ENCODE measurements at regions of chr2 and their contacts with region 1.

Region 1: DNA sequence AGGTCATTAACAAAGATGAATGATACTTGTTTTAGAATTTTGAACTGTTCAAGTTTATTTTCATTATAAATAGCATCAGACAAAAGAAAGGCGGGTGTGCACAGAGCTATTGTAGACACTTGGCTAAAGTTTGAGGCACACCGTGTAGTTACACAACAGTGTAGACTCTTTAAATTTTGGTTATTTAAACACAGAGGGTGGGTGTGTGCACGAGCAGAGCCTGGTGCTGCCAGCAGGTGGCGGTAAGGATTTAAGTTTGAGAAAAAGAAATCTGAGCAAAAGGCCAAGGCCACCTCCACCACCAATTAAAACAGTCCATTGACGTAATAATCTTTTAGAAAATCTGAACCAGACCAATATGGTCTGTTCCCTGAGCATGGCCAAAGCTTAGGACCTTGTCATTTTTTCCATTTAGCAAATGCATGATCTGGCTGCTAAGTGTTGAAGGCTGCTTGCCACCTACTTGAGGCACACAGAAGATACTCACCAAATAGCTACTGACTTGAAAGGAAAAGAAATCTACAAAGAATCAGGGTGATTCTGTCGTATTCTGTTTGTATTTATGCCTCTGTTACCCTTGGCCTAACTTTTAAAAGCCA is 14.3 kb downstream of the COPS7B start:
- DNase-seq: peak in 1 of 2 experiments; percentile 78
- H3K4me3 ChIP-seq: no peak overlapping the region
- H3K27ac ChIP-seq: no peak overlapping the region
- H3K4me1 ChIP-seq: no peaks in the 10 kb centered on the region; a peak in 1 of 7 replicates
- H3K27me3 ChIP-seq: no peaks in the 10 kb centered on the region
- CTCF ChIP-seq: peak; percentile 65 to 78 (median 67)
- EP300 ChIP-seq: no peak
- POLR2A ChIP-seq: no peak
- RAD21 ChIP-seq: peak; percentile 39 to 57

Region 2: DNA sequence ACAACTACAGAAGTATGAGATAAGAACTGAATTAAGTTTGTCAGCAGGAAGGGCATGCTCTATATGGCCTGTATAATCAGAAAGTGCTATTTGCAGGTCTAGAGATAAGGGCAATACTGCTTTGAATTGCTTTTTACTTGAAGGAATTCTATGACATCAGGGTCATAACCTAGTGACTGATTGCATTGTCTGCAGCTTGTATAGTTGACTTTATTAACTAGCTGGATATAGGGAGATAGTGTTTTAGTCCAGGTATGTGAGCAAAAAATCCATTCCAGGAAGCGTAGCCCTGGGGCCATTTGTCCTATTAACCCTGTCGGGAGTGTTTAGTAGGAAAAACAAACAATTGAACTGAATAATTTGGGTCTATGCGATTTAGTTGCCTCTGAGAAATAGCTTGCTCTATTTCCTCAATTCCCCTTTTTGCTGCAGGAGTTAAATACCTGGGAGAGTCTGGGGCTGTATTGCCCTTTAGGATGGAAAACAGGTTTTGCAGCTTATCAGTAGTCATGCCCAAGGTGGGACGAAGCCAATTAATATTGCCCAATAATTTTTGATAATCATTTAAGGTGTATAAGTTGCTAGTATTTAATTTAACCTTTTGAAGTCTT is 705.8 kb before region 1 on chr2:
- CTCF ChIA-PET with region 1: no interaction called
- POLR2A ChIA-PET with region 1: no interaction called
- DNase-seq: no peak
- H3K4me3 ChIP-seq: no peak overlapping the region
- H3K27ac ChIP-seq: no peak overlapping the region
- H3K4me1 ChIP-seq: no peaks in the 10 kb centered on the region
- H3K27me3 ChIP-seq: no peaks in the 10 kb centered on the region
- CTCF ChIP-seq: no peak
- EP300 ChIP-seq: no peak
- POLR2A ChIP-seq: no peak
- RAD21 ChIP-seq: no peak

Region 3: GRCh38 chr2:231786177-231786916 is 14.2 kb before region 1 on chr2 and contains the start of gene COPS7B:
- CTCF ChIA-PET with region 1: interaction called, 74 read pairs
- POLR2A ChIA-PET with region 1: interaction called, 11 read pairs
- DNase-seq: peak; percentile 77 to 93
- H3K4me3 ChIP-seq: peak within 1 kb of the TSS; percentile 66 to 87 (median 74)
- H3K27ac ChIP-seq: peak within 1 kb of the TSS; percentile 92
- H3K4me1 ChIP-seq: peaks cover 0 to 8% (median 2%) of the 10 kb centered on the region in 4 experiments; a peak in 3 of 7 replicates
- H3K27me3 ChIP-seq: no peaks in the 10 kb centered on the region
- CTCF ChIP-seq: peak; percentile 69 to 88 (median 81)
- EP300 ChIP-seq: peak in 1 of 2 experiments; percentile 83; a peak in 1 of 3 replicates
- POLR2A ChIP-seq: peak; percentile 23 to 86
- RAD21 ChIP-seq: peak; percentile 49 to 60
- total RNA-seq, gene COPS7B: 62.2 and 67.2 TPM in 2 replicates

Region 4: DNA sequence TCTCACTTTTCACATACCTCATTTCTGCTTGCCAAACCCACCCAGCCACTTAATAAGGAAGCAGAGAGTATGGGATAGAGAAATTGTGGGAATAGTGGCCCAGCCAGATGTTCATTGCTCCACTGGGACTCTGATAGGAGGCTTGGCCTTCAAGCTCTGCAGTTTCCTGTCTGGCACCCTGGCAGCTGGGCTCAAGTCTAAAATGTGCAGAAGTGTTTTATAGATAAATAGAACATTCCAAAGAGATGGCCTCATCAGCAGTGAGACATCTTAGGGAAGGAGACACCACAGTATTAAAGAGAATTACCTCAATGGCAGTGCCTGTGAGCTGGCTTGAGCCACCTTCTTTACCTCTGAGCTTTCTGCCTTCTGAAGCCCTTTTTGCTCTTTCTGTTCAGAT is 10.3 kb after region 1 on chr2:
- CTCF ChIA-PET with region 1: interaction called, 74 read pairs
- POLR2A ChIA-PET with region 1: interaction called, 10 read pairs
- DNase-seq: no peak
- H3K4me3 ChIP-seq: no peak overlapping the region
- H3K27ac ChIP-seq: no peak overlapping the region
- H3K4me1 ChIP-seq: no peaks in the 10 kb centered on the region
- H3K27me3 ChIP-seq: no peaks in the 10 kb centered on the region
- CTCF ChIP-seq: no peak
- EP300 ChIP-seq: no peak
- POLR2A ChIP-seq: no peak
- RAD21 ChIP-seq: no peak

Region 5: DNA sequence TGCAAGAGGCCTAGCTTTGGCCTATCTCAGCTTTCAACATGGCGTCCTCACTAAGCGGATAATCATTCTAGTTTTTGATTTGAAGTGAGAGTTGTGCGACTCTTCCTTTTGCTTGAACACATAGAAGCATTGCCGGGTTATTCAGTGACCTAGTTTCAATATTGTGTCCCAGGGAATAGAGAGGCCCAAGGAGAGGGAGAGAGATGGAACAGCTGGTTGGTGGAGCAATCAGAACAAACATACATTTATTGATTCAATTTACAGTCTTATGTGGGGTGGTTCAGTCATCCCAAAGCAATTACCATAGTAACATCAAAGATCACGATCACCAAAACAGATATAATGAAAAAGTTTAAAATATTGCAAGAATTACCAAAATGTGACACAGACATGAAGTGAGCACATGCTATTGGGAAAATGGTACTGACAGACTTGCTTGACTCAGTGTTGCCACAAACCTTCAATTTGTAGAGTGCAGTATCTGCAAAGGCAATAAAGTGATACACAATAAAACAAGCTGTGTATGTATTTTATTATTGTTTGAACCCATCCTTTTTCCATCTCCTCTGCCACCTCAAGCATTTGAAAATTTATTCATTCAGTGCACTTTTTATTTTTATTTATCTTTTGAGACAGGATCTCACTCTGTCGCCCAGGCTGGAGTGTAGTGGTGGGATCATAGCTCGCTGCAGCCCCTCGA is 15.9 kb after region 1 on chr2:
- CTCF ChIA-PET with region 1: interaction called, 34 read pairs
- POLR2A ChIA-PET with region 1: interaction called, 10 read pairs
- DNase-seq: no peak
- H3K4me3 ChIP-seq: no peak overlapping the region
- H3K27ac ChIP-seq: no peak overlapping the region
- H3K4me1 ChIP-seq: no peaks in the 10 kb centered on the region
- H3K27me3 ChIP-seq: no peaks in the 10 kb centered on the region
- CTCF ChIP-seq: no peak
- EP300 ChIP-seq: no peak
- POLR2A ChIP-seq: no peak
- RAD21 ChIP-seq: no peak

Region 6: DNA sequence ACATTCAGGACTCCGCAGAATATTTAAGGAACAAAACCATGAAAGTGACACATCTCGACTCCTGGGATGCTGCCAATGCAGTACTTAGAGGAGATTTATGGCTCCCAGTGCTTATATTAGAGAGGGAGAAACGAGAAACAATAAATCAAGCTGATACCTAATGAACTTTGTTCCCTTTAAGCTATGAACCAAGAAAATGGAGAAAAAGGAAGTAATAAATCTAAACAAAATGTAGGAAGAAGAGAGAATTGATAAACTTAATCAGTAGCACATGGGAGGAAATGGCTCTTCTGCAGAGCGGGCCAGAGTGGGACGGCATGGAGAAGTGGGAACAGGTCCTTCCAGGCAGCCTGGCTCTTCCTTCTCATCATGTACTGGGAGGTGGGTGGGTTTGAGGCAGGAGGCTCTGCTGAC is 82.9 kb after region 1 on chr2:
- CTCF ChIA-PET with region 1: interaction called, 10 read pairs
- POLR2A ChIA-PET with region 1: no interaction called
- DNase-seq: no peak
- H3K4me3 ChIP-seq: no peak overlapping the region
- H3K27ac ChIP-seq: no peak overlapping the region
- H3K4me1 ChIP-seq: peaks cover 0 to 3% (median 0%) of the 10 kb centered on the region in 4 experiments; a peak in 1 of 7 replicates
- H3K27me3 ChIP-seq: no peaks in the 10 kb centered on the region
- CTCF ChIP-seq: no peak
- EP300 ChIP-seq: no peak
- POLR2A ChIP-seq: no peak
- RAD21 ChIP-seq: no peak

Measured in H1 (cell line).